ENCODE measurements at regions of chr13 and their contacts with region 1.

Region 1: GRCh38 chr13:26985285-26985878 is 186.2 kb downstream of the USP12 start:
- DNase-seq: no peak
- ATAC-seq: peak; percentile 89
- H3K4me3 ChIP-seq: no peak overlapping the region
- H3K27ac ChIP-seq: no peak overlapping the region
- H3K4me1 ChIP-seq: no peaks in the 10 kb centered on the region
- H3K27me3 ChIP-seq: no peaks in the 10 kb centered on the region

Region 2: GRCh38 chr13:27283906-27284493 is 298.6 kb after region 1 on chr13:
- intact Hi-C with region 1: loop called (anchors 5 kb)
- DNase-seq: no peak
- ATAC-seq: no peak
- H3K4me3 ChIP-seq: no peak overlapping the region
- H3K27ac ChIP-seq: no peak overlapping the region
- H3K4me1 ChIP-seq: no peaks in the 10 kb centered on the region
- H3K27me3 ChIP-seq: no peaks in the 10 kb centered on the region

Region 3: GRCh38 chr13:27980280-27980998 is 995.1 kb after region 1 on chr13:
- intact Hi-C with region 1: loop called in 1 of 2 experiments (anchors 10 kb)
- DNase-seq: no peak
- ATAC-seq: no peak
- H3K4me3 ChIP-seq: no peak overlapping the region
- H3K27ac ChIP-seq: no peak overlapping the region
- H3K4me1 ChIP-seq: no peaks in the 10 kb centered on the region
- H3K27me3 ChIP-seq: no peaks in the 10 kb centered on the region